ENCODE measurements at regions of chr7 and their contacts with region 1.

Region 1: GRCh38 chr7:102390697-102391484 is 5.3 kb upstream of the PRKRIP1 start:
- DNase-seq: peak; percentile 91
- H3K4me3 ChIP-seq: no peak overlapping the region
- H3K27ac ChIP-seq: no peak overlapping the region
- H3K4me1 ChIP-seq: peaks cover 0 to 2% of the 10 kb centered on the region in 2 experiments; a peak in 1 of 4 replicates
- H3K27me3 ChIP-seq: no peaks in the 10 kb centered on the region
- CTCF ChIP-seq: peak; percentile 99
- EP300 ChIP-seq: no peak
- RAD21 ChIP-seq: peak; percentile 99

Region 2: GRCh38 chr7:102089175-102090098 is 301.5 kb before region 1 on chr7:
- CTCF ChIA-PET with region 1: no interaction called
- POLR2A ChIA-PET with region 1: no interaction called
- DNase-seq: no peak
- H3K4me3 ChIP-seq: no peak overlapping the region
- H3K27ac ChIP-seq: no peak overlapping the region
- H3K4me1 ChIP-seq: no peaks in the 10 kb centered on the region
- H3K27me3 ChIP-seq: no peaks in the 10 kb centered on the region
- CTCF ChIP-seq: no peak
- EP300 ChIP-seq: no peak
- RAD21 ChIP-seq: no peak

Region 3: DNA sequence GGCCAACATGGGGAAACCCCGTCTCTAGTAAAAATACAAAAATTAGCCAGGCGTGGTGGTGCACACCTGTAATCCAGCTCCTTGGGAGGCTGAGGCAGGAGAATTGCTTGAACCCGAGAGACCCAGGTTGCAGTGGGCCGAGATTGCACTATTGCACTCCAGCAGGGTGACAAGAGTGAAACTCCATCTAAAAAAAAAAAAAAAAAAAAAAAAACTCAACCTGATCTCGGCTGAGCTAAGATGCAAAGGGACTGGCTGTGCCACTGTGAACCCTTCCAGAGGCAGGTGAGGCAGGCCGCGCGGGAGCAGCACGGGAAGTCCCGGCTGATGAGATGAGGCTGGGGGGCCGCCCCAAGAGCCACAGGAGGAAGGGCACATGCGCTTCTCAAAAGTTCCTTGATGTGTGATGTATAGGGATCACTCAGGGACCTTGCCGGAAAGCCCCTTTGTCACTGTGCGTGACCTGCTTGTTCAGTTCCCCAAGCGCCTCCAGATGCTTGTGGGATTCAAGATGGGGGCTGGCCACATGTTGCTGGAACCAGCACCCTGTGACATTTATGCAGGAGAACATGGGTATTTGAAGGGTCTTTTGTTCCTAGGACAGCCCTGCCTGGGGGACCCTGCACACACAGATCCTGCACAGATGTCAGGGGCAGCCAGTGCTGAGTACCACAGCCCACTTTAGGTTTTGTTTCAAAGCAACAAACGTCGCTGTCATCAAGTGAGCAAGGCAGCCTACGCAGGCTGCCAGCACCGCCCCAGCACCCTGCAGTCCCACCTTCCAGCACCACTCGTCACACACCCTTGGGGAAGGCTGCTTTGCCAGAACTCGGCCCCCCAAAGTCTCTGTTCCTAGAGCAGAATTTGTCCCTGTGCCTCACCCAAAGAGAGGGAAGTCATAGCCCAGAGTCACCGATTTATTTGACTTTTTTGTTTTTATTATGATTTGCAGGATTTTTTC is 179.0 kb before region 1 on chr7:
- CTCF ChIA-PET with region 1: no interaction called
- POLR2A ChIA-PET with region 1: no interaction called
- DNase-seq: no peak
- H3K4me3 ChIP-seq: no peak overlapping the region
- H3K27ac ChIP-seq: no peak overlapping the region
- H3K4me1 ChIP-seq: peaks cover 0 to 21% of the 10 kb centered on the region in 2 experiments; a peak in 2 of 4 replicates
- H3K27me3 ChIP-seq: no peaks in the 10 kb centered on the region
- CTCF ChIP-seq: no peak
- EP300 ChIP-seq: no peak
- RAD21 ChIP-seq: no peak

Region 4: DNA sequence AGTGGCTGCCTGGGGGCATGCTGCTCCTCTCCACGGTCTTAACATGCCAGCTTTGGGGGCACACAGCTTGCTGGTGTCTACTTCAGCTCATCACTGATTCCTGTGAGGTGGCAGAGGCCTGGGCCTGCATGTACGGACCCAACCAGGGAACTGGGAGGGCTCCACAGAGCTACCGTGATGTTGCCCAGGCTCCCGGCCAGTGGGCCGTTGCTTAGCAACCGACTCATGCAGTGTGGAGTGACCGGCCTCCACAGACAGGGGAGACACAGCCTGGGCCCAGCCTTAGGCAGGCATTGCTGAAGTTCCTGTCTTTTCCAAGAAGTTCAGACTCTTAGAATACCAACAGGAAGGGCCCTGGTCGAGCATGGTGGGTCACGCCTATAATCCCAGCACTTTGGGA is 130.0 kb before region 1 on chr7:
- CTCF ChIA-PET with region 1: no interaction called
- POLR2A ChIA-PET with region 1: no interaction called
- DNase-seq: peak; percentile 96
- H3K4me3 ChIP-seq: no peak overlapping the region
- H3K27ac ChIP-seq: peak overlapping the region in 1 of 2 experiments; percentile 72; a peak in 2 of 4 replicates
- H3K4me1 ChIP-seq: peaks cover 0 to 19% of the 10 kb centered on the region in 2 experiments; a peak in 1 of 4 replicates
- H3K27me3 ChIP-seq: no peaks in the 10 kb centered on the region
- CTCF ChIP-seq: no peak
- EP300 ChIP-seq: no peak
- RAD21 ChIP-seq: peak; percentile 1; the same call in 1 of the 2 replicates

Region 5: DNA sequence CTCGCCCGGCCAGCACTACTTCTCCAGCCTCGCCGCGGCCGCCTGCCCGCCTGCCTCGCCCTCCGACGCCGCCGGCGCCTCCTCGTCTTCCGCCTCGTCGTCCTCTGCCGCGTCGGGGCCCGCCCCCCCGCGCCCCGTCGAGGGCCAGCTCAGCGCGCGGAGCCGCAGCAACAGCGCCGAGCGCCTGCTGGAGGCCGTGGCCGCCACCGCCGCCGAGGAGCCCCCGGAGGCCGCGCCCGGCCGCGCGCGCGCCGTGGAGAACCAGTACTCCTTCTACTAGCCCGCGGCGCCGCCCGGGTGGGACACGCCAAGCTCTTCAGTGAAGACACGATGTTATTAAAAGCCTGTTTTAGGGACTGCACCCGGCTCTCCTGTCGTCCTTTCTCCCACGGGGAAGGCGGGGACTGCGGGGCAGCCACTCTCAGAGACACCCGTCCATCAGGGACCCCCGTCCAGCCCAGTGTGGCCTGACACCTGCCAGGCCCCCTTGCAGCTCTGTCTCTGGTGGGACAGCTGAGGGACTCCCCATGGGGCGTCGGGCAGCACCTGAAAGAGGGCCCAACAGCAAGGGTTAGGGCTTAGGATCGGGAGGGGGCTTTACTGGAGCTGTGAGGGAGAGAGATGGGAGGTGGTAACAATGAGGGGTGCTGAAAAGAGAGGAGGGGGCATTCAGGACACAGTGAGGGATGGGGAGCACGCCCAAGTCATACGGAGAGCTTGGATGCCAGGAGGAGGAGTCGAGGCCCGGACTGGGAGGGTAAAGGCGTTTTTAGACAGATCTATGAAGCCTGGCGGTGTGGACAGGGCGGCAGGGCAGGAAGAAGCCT is 69.3 kb before region 1 on chr7:
- CTCF ChIA-PET with region 1: interaction called, 12 read pairs
- POLR2A ChIA-PET with region 1: no interaction called
- DNase-seq: peak; percentile 46
- H3K4me3 ChIP-seq: no peak overlapping the region
- H3K27ac ChIP-seq: no peak overlapping the region
- H3K4me1 ChIP-seq: peaks cover 0 to 4% of the 10 kb centered on the region in 2 experiments; a peak in 1 of 4 replicates
- H3K27me3 ChIP-seq: no peaks in the 10 kb centered on the region
- CTCF ChIP-seq: no peak
- EP300 ChIP-seq: no peak
- RAD21 ChIP-seq: no peak

Region 6: GRCh38 chr7:102376964-102377466 is 13.9 kb before region 1 on chr7:
- CTCF ChIA-PET with region 1: interaction called, 11 read pairs
- POLR2A ChIA-PET with region 1: no interaction called
- DNase-seq: no peak
- H3K4me3 ChIP-seq: no peak overlapping the region
- H3K27ac ChIP-seq: no peak overlapping the region
- H3K4me1 ChIP-seq: peaks cover 0 to 5% of the 10 kb centered on the region in 2 experiments; a peak in 1 of 4 replicates
- H3K27me3 ChIP-seq: no peaks in the 10 kb centered on the region
- CTCF ChIP-seq: no peak
- EP300 ChIP-seq: no peak
- RAD21 ChIP-seq: no peak